Aorta (tissue), 5 donors: ENCODE measurements at regions of chr2 and their contacts with region 1.

Region 1: DNA sequence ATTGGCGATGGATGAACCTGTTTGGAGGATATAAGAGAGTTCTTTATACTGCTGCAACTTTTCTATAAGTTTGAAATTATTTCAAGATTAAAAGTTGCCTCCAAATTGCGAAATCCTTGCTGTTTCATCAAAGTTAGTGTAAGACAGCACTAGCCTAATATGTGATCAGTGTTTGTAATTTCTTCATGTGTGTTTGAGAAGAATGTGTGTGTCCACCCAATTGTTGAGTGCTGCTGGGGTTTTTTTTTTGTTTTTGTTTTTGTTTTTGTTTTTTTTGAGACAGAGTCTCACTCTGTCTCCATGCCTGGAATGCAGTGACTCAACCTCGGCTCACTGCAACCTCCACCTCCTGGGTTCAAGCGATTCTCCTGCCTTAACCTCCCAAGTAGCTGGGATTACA is 33.4 kb downstream of the CDK15 start:
- DNase-seq: no peak
- ATAC-seq: no peak
- H3K4me3 ChIP-seq: no peak overlapping the region
- H3K27ac ChIP-seq: no peak overlapping the region
- H3K4me1 ChIP-seq: peaks cover 0 to 9% of the 10 kb centered on the region in 2 donors
- H3K27me3 ChIP-seq: no peaks in the 10 kb centered on the region

Region 2: GRCh38 chr2:201795607-201796477 is 43.9 kb before region 1 on chr2:
- intact Hi-C with region 1: no loop called
- DNase-seq: no peak
- ATAC-seq: peak; percentile 71
- H3K4me3 ChIP-seq: no peak overlapping the region
- H3K27ac ChIP-seq: no peak overlapping the region
- H3K4me1 ChIP-seq: peaks cover 0 to 2% of the 10 kb centered on the region in 2 donors
- H3K27me3 ChIP-seq: no peaks in the 10 kb centered on the region

Region 3: DNA sequence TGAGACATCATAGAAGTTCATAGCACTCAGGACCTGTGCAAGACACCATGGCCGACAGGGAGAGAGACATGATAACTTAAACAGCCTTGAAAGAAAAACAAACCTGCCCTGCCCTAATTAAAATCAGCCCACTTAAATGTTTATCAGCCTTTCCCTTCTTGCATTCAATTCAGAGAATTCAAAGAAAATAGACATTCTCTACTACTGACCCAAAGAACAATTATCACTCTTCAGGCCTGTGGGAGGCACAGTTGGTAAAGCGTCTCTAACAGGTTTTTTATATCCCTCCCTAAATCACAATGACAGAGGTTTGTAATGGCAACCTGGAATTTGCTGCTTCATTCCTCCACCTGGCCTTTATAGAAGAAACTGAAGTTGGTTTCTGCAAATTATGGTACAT is 31.7 kb before region 1 on chr2:
- intact Hi-C with region 1: loop called in 1 of 2 experiments (anchors 2 kb)
- DNase-seq: no peak
- ATAC-seq: no peak
- H3K4me3 ChIP-seq: no peak overlapping the region
- H3K27ac ChIP-seq: peak overlapping the region; percentile 73 to 95
- H3K4me1 ChIP-seq: peaks cover 2 to 5% of the 10 kb centered on the region in 2 donors
- H3K27me3 ChIP-seq: no peaks in the 10 kb centered on the region